RWPE1 (cell line): ENCODE measurements at regions of chr2 and their contacts with region 1.

Region 1: GRCh38 chr2:43169091-43169945 is 57.1 kb downstream of the ZFP36L2 start:
- DNase-seq: peak; percentile 68
- H3K27ac ChIP-seq: peak overlapping the region; percentile 96
- CTCF ChIP-seq: no peak

Region 2: DNA sequence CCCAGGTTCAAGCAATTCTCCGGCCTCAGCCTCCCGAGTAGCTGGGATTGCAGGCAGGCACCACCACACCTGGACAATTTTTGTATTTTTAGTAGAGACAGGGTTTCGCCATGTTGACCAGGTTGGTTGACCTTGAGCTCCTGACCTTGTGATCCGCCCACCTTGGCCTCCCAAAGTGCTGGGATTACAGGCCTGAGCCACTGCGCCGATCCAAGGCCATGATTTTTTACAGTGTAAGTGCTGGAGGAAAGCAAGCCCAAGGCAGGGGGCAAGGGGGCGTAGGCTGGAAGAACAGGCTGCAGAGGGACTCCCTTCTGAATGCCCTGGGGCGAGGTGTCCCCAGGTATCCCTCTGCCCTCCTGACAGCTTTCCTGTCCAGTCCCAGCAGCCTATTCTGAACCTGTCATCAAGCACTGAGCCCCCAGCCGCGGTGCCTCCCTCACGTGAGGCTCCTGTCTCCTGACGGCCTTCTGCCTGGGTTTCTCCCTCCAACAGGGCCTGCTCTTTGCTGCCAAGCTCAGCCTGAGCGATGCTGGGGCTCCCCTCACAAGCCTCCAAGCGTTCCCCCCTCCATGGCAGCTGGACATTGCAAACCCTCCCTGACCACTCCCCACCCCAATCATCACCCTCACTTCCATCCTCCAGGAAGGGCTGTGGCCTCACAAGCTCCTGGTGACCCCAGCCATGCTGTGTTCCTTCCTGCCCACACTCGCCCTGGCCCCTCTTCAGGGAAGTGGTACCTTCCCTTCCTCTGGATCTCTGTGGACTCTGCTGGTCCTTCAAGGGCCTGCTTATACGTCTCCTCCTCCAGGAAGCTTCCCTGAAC is 19.5 kb after region 1 on chr2:
- CTCF ChIA-PET with region 1: interaction called, 11 read pairs
- POLR2A ChIA-PET with region 1: no interaction called
- DNase-seq: no peak
- H3K27ac ChIP-seq: 0 out of 2 replicates have a peak overlapping the region, but pooled peaks have one; percentile 10
- CTCF ChIP-seq: no peak